Activated CD8-positive, alpha-beta T cell treated with anti-CD3 and anti-CD28 coated beads, Interleukin-2, amount 10 ng/mL, durations not matched to agents 7 days and 5 days (primary cell): ENCODE measurements at regions of chr1 and their contacts with region 1.

Region 1: GRCh38 chr1:40315239-40315794 is 1.8 kb downstream of the COL9A2 start:
- DNase-seq: peak; percentile 90
- ATAC-seq: peak; percentile 80
- H3K4me3 Mint-ChIP-seq: peak overlapping the region; percentile 74
- H3K27ac Mint-ChIP-seq: no peak overlapping the region
- H3K4me1 Mint-ChIP-seq: peaks cover 52% of the 10 kb centered on the region
- H3K27me3 Mint-ChIP-seq: peaks cover 27% of the 10 kb centered on the region

Region 2: DNA sequence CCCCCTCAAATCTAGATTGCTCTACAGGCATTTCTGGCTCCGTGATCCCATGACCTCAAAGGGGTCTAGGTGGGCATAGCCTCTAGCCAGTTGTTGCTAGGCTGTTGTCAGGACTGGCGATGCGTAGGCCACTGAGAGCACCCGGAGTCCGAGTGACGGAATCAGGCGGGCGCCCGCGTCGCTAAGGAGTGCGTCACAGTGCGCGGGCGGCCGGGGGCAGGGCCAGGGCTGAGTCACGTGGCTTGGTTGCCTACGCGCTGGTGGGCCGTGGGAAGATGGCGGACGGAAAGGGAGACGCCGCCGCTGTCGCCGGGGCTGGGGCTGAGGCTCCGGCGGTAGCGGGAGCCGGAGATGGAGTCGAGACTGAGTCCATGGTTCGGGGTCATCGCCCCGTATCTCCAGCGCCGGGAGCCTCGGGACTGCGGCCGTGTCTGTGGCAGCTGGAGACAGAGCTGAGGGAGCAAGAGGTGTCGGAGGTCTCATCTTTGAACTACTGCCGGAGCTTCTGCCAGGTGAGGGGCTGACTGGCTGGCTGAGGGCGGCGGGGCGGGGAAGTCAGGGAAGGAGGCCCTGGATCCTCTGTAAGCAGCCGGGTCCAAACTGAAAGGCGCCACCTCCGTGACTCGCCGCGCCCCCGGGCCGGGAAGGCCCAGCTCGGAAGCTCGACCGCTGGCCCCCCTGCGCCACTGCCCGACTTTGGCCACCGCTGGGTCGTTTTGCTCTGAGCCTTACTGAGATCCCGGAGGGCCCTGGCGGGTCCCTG is 154.0 kb before region 1 on chr1 and contains the start of gene RLF:
- CTCF ChIA-PET with region 1: interaction called, 14 read pairs
- POLR2A ChIA-PET with region 1: interaction called, 5 read pairs
- DNase-seq: peak; percentile 96
- ATAC-seq: peak; percentile 96
- H3K4me3 Mint-ChIP-seq: no peak within 1 kb of the TSS
- H3K27ac Mint-ChIP-seq: peak within 1 kb of the TSS; percentile 36
- H3K4me1 Mint-ChIP-seq: peaks cover 15% of the 10 kb centered on the region
- H3K27me3 Mint-ChIP-seq: no peaks in the 10 kb centered on the region
- total RNA-seq, gene RLF: 20.4 to 22.3 TPM

Region 3: GRCh38 chr1:40241362-40241761 is 74.0 kb before region 1 on chr1:
- CTCF ChIA-PET with region 1: interaction called, 10 read pairs
- POLR2A ChIA-PET with region 1: interaction called, 3 read pairs
- DNase-seq: no peak
- ATAC-seq: no peak
- H3K4me3 Mint-ChIP-seq: no peak overlapping the region
- H3K27ac Mint-ChIP-seq: peak overlapping the region; percentile 76
- H3K4me1 Mint-ChIP-seq: peaks cover 36% of the 10 kb centered on the region
- H3K27me3 Mint-ChIP-seq: no peaks in the 10 kb centered on the region

Region 4: DNA sequence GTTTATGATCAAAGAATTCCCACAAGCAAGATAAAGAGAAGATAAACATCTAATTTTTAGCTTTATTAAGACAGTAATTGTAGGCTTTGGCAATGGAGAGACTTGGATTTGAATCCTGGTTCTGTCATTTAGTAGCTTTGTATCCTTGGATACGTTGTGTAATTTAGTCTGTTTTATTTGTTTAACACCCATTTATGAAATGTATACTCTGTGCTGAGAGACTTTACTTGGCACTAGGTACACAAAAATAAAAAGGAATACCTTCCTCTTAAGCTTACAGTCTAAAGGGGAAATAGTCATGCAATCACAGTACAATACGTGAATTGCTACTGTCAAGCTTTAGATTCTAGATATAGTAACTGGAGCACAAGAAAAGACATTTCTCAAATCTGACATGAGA is 33.5 kb before region 1 on chr1:
- CTCF ChIA-PET with region 1: interaction called, 18 read pairs
- POLR2A ChIA-PET with region 1: no interaction called
- DNase-seq: no peak
- ATAC-seq: no peak
- H3K4me3 Mint-ChIP-seq: no peak overlapping the region
- H3K27ac Mint-ChIP-seq: no peak overlapping the region
- H3K4me1 Mint-ChIP-seq: peaks cover 3% of the 10 kb centered on the region
- H3K27me3 Mint-ChIP-seq: no peaks in the 10 kb centered on the region

Region 5: GRCh38 chr1:40299366-40300248 is 15.7 kb before region 1 on chr1:
- CTCF ChIA-PET with region 1: interaction called, 19 read pairs
- POLR2A ChIA-PET with region 1: no interaction called
- DNase-seq: no peak
- ATAC-seq: no peak
- H3K4me3 Mint-ChIP-seq: no peak overlapping the region
- H3K27ac Mint-ChIP-seq: no peak overlapping the region
- H3K4me1 Mint-ChIP-seq: no peaks in the 10 kb centered on the region
- H3K27me3 Mint-ChIP-seq: no peaks in the 10 kb centered on the region

Region 6: DNA sequence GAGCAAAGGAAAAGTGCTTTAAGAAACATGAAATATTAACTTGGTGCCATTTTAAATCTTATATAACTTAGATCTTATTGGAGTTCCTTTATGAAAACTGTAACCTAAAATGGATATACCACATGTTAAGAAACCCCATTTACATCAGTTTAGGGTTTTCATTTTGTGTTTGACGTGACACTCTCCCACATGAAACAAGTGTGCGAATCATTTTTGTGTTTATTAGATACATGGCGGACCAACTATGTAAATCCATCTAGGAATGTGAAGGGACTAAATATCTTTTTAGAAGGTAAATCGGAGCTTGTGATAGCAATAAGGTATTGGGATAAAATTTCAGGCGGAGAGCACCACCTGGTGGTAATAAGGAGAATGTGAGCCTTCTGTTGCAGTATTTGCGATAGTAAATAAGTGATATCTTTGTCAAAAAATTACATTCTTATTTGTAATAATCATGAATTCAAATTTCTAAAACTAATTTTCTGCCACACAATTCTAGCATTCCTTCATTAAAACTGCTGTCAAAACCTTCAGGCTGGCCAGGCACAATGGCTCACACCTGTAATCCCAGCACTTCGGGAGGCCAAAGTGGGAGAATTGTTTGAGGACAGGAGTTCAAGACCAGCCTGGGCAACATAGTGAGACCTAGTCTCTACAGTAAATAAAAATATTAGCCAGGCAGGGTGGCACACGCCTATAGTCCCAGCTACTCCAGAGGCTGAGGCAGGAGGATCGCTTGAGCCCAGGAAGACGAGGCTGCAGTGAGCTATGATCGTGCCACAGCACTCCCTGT is 89.5 kb after region 1 on chr1:
- CTCF ChIA-PET with region 1: interaction called, 37 read pairs
- POLR2A ChIA-PET with region 1: interaction called, 5 read pairs
- DNase-seq: peak; percentile 67
- ATAC-seq: peak; percentile 57
- H3K4me3 Mint-ChIP-seq: no peak overlapping the region
- H3K27ac Mint-ChIP-seq: peak overlapping the region; percentile 75
- H3K4me1 Mint-ChIP-seq: peaks cover 52% of the 10 kb centered on the region
- H3K27me3 Mint-ChIP-seq: no peaks in the 10 kb centered on the region